ENCODE measurements at regions of chr9 and their contacts with region 1.

Region 1: GRCh38 chr9:115649991-115650472 is 503.6 kb upstream of the PAPPA start:
- DNase-seq: peak; percentile 95
- H3K4me3 ChIP-seq: no peak overlapping the region
- H3K27ac ChIP-seq: peak overlapping the region; percentile 61 to 71 (median 68)
- H3K4me1 ChIP-seq: peaks cover 0 to 16% (median 8%) of the 10 kb centered on the region in 4 donors
- H3K27me3 ChIP-seq: no peaks in the 10 kb centered on the region
- CTCF ChIP-seq: no peak
- EP300 ChIP-seq: peak; percentile 65 to 93 (median 84)
- POLR2A ChIP-seq: no peak

Region 2: GRCh38 chr9:115944166-115944948 is 294.3 kb after region 1 on chr9:
- intact Hi-C with region 1: loop called (anchors 10 kb)
- DNase-seq: peak; percentile 93
- H3K4me3 ChIP-seq: no peak overlapping the region
- H3K27ac ChIP-seq: peak overlapping the region; percentile 32 to 74 (median 54)
- H3K4me1 ChIP-seq: no peaks in the 10 kb centered on the region
- H3K27me3 ChIP-seq: no peaks in the 10 kb centered on the region
- CTCF ChIP-seq: no peak
- EP300 ChIP-seq: peak in 1 of 4 donors; percentile 56
- POLR2A ChIP-seq: no peak

Region 3: DNA sequence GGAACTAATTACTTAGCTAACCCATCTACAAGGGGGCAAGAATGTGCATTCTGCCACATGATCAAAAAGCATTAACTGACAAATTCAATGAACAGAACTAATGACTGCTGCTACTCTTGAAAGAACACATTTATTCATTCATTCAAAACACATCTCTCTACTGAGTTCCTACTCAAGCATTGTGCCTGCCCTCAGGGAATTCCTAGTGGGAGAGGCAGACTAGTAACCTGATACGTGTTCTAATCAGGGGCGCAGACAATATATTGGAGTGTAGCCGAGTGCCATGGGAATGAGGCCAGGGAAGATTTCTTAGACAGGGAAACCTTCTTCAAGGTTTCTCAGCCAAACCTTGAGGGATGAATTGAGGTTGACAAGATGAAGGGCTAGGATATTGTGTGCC is 446.8 kb after region 1 on chr9:
- intact Hi-C with region 1: no loop called
- DNase-seq: no peak
- H3K4me3 ChIP-seq: no peak overlapping the region
- H3K27ac ChIP-seq: no peak overlapping the region
- H3K4me1 ChIP-seq: no peaks in the 10 kb centered on the region
- H3K27me3 ChIP-seq: no peaks in the 10 kb centered on the region
- CTCF ChIP-seq: no peak
- EP300 ChIP-seq: no peak
- POLR2A ChIP-seq: no peak